ENCODE measurements at regions of chr19 and their contacts with region 1.

Region 1: DNA sequence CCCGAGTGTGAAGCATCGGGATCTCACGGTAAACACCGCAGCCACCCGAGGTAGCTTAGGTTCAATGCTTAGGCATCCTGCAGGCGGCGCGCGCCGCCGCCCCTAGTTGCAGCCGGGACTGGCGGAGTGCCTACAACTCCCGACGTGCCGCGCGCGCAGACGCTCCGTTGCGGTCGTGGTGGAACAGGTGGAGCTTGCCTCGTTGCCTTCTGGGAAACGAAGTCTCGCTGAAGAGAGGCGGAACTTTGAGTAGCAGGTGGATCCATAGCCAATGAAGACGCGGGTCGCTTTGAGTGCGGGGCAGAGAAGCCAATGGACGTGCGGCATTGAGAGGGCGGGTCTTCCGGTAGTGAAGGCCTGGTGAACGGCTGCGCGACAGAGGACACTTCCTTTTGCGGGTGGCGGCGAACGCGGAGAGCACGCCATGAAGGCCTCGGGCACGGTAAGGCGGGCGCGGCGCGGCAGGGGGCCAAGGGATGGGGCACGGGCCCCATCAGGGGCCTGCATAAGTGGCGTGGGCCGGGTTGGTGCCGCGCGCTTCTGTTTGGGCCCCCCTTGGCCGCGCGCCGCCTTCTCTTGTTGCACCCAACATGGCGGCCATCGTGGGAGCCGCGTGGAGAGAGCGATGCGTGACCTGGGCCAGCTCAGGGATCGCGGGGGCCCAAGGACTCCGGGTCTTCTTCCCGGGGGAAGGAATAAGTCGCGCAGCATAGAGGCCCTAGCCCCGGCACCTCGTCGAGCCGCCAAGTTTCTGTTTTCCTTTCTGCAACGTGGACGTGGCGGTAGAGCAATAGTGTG is at the start of gene RPL18A:
- DNase-seq: peak; percentile 97 to 99 (median 99)
- H3K4me3 ChIP-seq: peak within 1 kb of the TSS; percentile 95
- H3K4me3 Mint-ChIP-seq: peak within 1 kb of the TSS; percentile 93 to 100 (median 97)
- H3K27ac ChIP-seq: peak within 1 kb of the TSS; percentile 80
- H3K27ac Mint-ChIP-seq: peak within 1 kb of the TSS; percentile 81 to 100 (median 96)
- H3K4me1 ChIP-seq: peaks cover 27% of the 10 kb centered on the region
- H3K4me1 Mint-ChIP-seq: peaks cover 34 to 40% (median 36%) of the 10 kb centered on the region in 3 donors
- H3K27me3 ChIP-seq: no peaks in the 10 kb centered on the region
- H3K27me3 Mint-ChIP-seq: peaks cover 0 to 4% of the 10 kb centered on the region in 2 donors
- total RNA-seq, gene RPL18A: 3,114 to 3,151 TPM

Region 2: GRCh38 chr19:17841810-17842662 is 17.7 kb before region 1 on chr19:
- CTCF ChIA-PET with region 1: interaction called, 10 read pairs
- POLR2A ChIA-PET with region 1: interaction called, 3 read pairs
- DNase-seq: peak in 2 of 5 donors; percentile 23 to 43
- H3K4me3 ChIP-seq: no peak overlapping the region
- H3K4me3 Mint-ChIP-seq: no peak overlapping the region
- H3K27ac ChIP-seq: peak overlapping the region; percentile 38
- H3K27ac Mint-ChIP-seq: peak overlapping the region in 2 of 8 donors; percentile 29 to 79
- H3K4me1 ChIP-seq: peaks cover 30% of the 10 kb centered on the region
- H3K4me1 Mint-ChIP-seq: peaks cover 31 to 41% (median 40%) of the 10 kb centered on the region in 3 donors
- H3K27me3 ChIP-seq: no peaks in the 10 kb centered on the region
- H3K27me3 Mint-ChIP-seq: no peaks in the 10 kb centered on the region

Region 3: GRCh38 chr19:17873786-17874757 is 14.3 kb after region 1 on chr19:
- CTCF ChIA-PET with region 1: interaction called, 21 read pairs
- POLR2A ChIA-PET with region 1: interaction called, 15 read pairs
- DNase-seq: peak; percentile 47 to 75 (median 57)
- H3K4me3 ChIP-seq: peak overlapping the region; percentile 61
- H3K4me3 Mint-ChIP-seq: peak overlapping the region; percentile 69 to 85 (median 77)
- H3K27ac ChIP-seq: no peak overlapping the region
- H3K27ac Mint-ChIP-seq: peak overlapping the region in 4 of 8 donors; percentile 18 to 76 (median 64)
- H3K4me1 ChIP-seq: peaks cover 19% of the 10 kb centered on the region
- H3K4me1 Mint-ChIP-seq: peaks cover 0 to 31% (median 6%) of the 10 kb centered on the region in 3 donors
- H3K27me3 ChIP-seq: no peaks in the 10 kb centered on the region
- H3K27me3 Mint-ChIP-seq: peaks cover 0 to 3% of the 10 kb centered on the region in 2 donors

Region 4: DNA sequence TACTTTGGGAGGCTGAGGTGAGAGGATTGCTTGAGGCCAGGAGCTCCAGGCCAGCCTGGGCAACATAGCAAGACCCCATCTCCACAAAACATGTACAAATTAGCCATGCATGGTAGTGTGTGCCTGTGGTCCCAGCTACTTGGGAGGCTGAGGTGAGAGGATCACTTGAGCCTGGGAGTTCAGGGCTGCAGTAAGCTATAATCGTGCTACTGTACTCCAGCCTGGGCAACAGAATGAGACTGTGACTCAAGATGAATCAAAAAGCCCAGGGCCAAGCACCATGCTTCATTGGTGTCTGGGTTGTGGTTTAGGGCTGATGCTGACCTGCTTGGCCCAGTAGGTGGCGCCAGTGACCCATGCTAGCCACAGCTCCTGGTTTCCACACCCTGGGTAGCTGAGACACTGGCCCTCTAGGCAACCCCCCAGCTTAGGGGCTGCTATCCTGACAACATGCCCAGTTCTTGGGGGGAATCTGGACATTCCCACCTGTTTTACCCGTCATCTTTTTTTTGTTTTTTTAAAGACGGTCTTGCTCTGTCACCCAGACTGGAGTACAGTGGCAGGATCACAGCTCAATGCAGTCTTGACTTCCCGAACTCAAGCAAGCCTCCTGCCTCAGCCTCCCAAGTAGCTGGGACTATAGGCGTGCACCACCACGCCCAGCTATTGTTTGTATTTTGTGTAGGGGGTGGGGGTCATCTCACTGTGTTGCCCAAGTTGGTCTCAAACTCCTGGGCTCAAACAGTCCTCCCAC is 78.5 kb after region 1 on chr19:
- CTCF ChIA-PET with region 1: interaction called, 213 read pairs
- POLR2A ChIA-PET with region 1: interaction called, 124 read pairs
- DNase-seq: peak; percentile 71 to 86 (median 76)
- H3K4me3 ChIP-seq: no peak overlapping the region
- H3K4me3 Mint-ChIP-seq: peak overlapping the region in 1 of 7 donors; percentile 26
- H3K27ac ChIP-seq: no peak overlapping the region
- H3K27ac Mint-ChIP-seq: peak overlapping the region in 2 of 8 donors; percentile 65 to 73
- H3K4me1 ChIP-seq: peaks cover 6% of the 10 kb centered on the region
- H3K4me1 Mint-ChIP-seq: peaks cover 7 to 17% (median 10%) of the 10 kb centered on the region in 3 donors
- H3K27me3 ChIP-seq: no peaks in the 10 kb centered on the region
- H3K27me3 Mint-ChIP-seq: no peaks in the 10 kb centered on the region

Region 5: DNA sequence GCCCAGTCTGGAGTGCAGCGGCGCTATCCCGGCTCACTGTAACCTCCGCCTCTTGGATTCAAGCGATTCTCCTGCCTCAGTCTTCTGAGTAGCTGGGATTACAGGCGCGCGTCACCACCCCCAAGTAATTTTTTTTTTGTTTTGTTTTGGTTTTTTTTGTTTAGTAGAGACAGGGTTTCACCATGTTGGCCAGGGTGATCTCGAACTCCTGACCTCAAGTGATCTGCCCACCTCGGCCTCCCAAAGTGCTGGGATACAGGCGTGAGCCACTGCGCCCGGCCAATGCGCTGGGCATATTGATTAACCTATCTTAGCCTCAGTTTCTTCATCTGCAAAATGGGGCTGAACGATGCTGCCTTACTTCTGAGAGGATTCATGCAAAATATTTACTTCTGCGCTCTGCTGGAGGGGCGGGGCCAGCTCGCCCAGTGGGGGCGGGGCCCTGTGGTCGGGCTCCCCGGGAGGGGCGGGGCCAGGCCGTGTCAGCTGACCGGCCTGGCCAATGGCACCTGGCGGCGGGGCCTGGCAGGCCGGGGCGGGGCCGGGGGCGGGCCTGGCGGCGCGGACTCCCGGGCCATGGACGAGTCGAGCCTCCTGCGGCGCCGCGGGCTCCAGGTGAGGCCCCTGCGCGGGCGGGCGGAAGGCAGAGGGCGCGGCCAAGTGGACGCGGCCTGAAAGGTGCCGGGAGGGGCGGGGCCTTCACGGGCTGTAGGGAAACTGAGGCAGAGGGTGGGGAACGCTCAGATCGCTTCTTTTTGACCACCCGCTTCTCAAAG is 237.7 kb after region 1 on chr19 and contains the start of gene MAST3:
- CTCF ChIA-PET with region 1: no interaction called
- POLR2A ChIA-PET with region 1: no interaction called
- DNase-seq: peak; percentile 88 to 93 (median 91)
- H3K4me3 ChIP-seq: peak within 1 kb of the TSS; percentile 83
- H3K4me3 Mint-ChIP-seq: peak within 1 kb of the TSS; percentile 86 to 95 (median 88)
- H3K27ac ChIP-seq: peak within 1 kb of the TSS; percentile 47
- H3K27ac Mint-ChIP-seq: peak within 1 kb of the TSS; percentile 68 to 97 (median 89)
- H3K4me1 ChIP-seq: peaks cover 39% of the 10 kb centered on the region
- H3K4me1 Mint-ChIP-seq: peaks cover 26 to 39% (median 30%) of the 10 kb centered on the region in 3 donors
- H3K27me3 ChIP-seq: no peaks in the 10 kb centered on the region
- H3K27me3 Mint-ChIP-seq: no peaks in the 10 kb centered on the region
- total RNA-seq, gene MAST3: 15.0 to 15.9 TPM

Measured in CD8-positive, alpha-beta memory T cell (primary cell).